ENCODE measurements at regions of chr16 and their contacts with region 1.

Region 1: DNA sequence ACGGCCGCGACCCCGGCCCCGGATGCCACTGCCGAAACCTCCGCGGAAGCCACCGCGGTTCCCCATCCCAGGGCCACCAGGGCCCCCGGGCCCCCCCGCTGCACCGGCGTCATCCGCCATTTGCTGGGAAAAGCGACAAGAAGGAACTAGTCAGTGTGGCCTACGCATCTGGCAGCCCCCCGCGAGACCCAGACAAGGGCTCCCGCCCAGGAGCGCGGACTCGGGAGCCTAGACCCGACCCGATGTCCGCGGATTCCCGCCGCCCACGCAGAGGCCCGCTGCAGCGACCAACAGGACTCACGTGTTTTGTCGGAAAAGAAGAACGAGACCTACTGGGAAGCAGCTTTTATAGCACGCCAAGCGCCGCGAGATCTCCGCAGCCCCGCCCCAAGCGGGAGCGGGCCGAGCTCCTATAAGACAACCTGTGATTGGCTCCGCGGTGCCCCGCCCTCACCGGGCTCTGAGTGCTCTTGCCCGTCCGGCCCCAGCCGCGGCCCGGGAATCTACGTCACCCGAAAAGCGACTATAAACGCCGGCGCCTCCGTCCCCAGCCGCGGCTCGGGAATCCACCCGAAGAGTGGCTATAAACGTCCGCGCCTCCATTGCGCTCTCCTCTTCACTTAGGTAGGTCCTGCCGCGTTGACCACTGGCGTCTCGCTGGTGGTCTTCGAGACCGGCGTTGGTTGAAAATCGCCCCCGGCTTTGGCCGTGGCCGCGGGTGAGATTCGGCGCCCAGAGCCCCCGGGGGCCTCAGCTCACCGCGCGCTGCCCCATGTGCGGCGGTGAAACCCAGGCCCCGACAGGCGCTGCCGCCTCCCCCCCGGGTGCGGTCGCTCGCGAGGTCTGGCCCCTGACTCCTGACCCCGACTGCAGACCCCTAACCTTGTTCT is at the start of gene RPS2:
- DNase-seq: peak; percentile 98
- H3K4me3 Mint-ChIP-seq: peak within 1 kb of the TSS; percentile 78
- H3K27ac Mint-ChIP-seq: peak within 1 kb of the TSS; percentile 95
- H3K4me1 Mint-ChIP-seq: peaks cover 23% of the 10 kb centered on the region
- H3K27me3 Mint-ChIP-seq: no peaks in the 10 kb centered on the region
- CTCF ChIP-seq: no peak
- total RNA-seq, gene RPS2: 4,760 and 4,836 TPM in 2 replicates

Region 2: GRCh38 chr16:1782352-1783091 is 182.2 kb before region 1 on chr16 and contains the starts of genes NUBP2 and SPSB3:
- CTCF ChIA-PET with region 1: no interaction called
- POLR2A ChIA-PET with region 1: interaction called, 24 read pairs
- intact Hi-C with region 1: no loop called
- DNase-seq: peak; percentile 100
- H3K4me3 Mint-ChIP-seq: peak within 1 kb of the TSS; percentile 88
- H3K27ac Mint-ChIP-seq: peak within 1 kb of the TSS; percentile 78
- H3K4me1 Mint-ChIP-seq: peaks cover 9% of the 10 kb centered on the region
- H3K27me3 Mint-ChIP-seq: no peaks in the 10 kb centered on the region
- CTCF ChIP-seq: no peak
- total RNA-seq, gene NUBP2: 71.3 and 73.9 TPM in 2 replicates
- total RNA-seq, gene SPSB3: 21.6 and 22.2 TPM in 2 replicates

Region 3: DNA sequence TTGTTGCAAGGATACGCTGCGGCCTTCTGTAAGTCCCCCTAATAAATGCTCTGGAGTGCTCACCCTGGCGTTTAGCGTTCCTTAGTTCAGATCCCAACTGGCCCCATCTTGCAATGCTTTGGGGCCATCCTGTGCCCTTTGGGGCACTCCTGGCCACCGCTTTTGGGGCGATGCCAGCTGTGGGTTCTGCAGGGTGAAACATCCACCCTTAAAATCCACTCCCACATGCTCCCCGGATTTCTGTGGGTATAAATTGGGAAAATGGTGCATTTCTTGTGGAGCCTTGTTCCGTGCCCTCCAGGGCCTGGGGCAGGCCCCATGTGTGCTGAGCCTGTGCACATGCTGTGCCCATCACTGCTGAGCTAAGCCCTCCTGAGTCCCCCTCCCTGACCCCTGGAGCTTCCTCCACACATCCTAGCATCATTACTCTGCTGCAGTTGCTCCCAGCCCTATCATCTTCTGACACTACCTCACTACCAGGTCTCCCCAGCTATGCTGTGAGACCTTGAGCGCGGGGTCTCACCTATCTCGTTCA is 27.7 kb before region 1 on chr16:
- CTCF ChIA-PET with region 1: no interaction called
- POLR2A ChIA-PET with region 1: interaction called, 33 read pairs
- intact Hi-C with region 1: no loop called
- DNase-seq: no peak
- H3K4me3 Mint-ChIP-seq: no peak overlapping the region
- H3K27ac Mint-ChIP-seq: no peak overlapping the region
- H3K4me1 Mint-ChIP-seq: peaks cover 4% of the 10 kb centered on the region
- H3K27me3 Mint-ChIP-seq: no peaks in the 10 kb centered on the region
- CTCF ChIP-seq: no peak

Region 4: GRCh38 chr16:1954209-1954912 is 10.4 kb before region 1 on chr16 and contains the start of gene RPL3L:
- CTCF ChIA-PET with region 1: interaction called, 3 read pairs
- POLR2A ChIA-PET with region 1: interaction called, 53 read pairs
- intact Hi-C with region 1: no loop called
- DNase-seq: no peak
- H3K4me3 Mint-ChIP-seq: no peak within 1 kb of the TSS
- H3K27ac Mint-ChIP-seq: no peak within 1 kb of the TSS
- H3K4me1 Mint-ChIP-seq: peaks cover 6% of the 10 kb centered on the region
- H3K27me3 Mint-ChIP-seq: no peaks in the 10 kb centered on the region
- CTCF ChIP-seq: no peak
- total RNA-seq, gene RPL3L: not detected in 2 replicates

Region 5: DNA sequence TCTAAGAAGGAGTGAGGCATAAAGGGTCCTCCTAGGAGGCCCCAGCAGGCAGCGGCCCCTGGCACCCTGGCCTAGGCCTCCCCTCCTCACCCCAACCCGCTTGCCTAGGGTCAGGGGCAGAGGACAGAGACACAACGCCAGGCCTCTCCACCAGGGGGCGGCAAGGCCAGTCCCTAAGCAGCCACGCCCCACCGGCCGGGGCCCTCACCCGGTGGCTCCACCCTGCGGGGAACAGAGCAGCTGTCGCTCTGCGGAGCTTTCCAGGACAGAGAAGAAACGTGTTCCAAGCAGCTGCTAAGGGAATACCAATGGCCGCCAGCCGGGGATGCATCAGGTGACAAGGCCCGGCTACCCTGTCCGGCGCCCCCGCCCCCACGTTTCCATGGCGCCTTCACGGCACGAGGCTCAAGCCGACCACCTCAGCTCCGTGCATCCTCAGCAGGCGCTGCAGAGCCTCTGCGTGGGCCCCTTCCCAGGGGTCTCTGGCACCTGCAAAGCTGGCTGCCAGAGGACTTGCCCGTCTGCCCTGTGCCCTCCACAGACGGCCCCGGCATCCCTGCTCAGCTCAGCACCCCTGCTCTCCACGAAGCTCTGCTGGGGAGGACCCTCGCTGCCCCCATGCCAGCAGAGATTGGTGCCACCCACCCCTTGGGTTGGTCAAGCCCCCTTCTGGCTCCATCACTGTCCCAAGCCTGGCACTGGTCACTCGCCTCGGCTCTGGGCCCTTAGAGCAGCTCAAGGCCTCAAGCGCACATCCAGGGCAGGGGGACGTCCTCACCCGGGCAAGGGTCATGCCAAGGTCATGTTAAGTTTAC is 39.3 kb after region 1 on chr16:
- CTCF ChIA-PET with region 1: interaction called, 5 read pairs
- POLR2A ChIA-PET with region 1: interaction called, 72 read pairs
- intact Hi-C with region 1: no loop called
- DNase-seq: peak; percentile 85
- H3K4me3 Mint-ChIP-seq: no peak overlapping the region
- H3K27ac Mint-ChIP-seq: peak overlapping the region; percentile 59
- H3K4me1 Mint-ChIP-seq: peaks cover 17% of the 10 kb centered on the region
- H3K27me3 Mint-ChIP-seq: no peaks in the 10 kb centered on the region
- CTCF ChIP-seq: peak; percentile 92

Region 6: GRCh38 chr16:2016407-2016922 is 51.7 kb after region 1 on chr16:
- CTCF ChIA-PET with region 1: no interaction called
- POLR2A ChIA-PET with region 1: interaction called, 14 read pairs
- intact Hi-C with region 1: no loop called
- DNase-seq: no peak
- H3K4me3 Mint-ChIP-seq: peak overlapping the region; percentile 47
- H3K27ac Mint-ChIP-seq: peak overlapping the region; percentile 96
- H3K4me1 Mint-ChIP-seq: peaks cover 6% of the 10 kb centered on the region
- H3K27me3 Mint-ChIP-seq: no peaks in the 10 kb centered on the region
- CTCF ChIP-seq: peak; percentile 39

Region 7: GRCh38 chr16:2251483-2252240 is 286.9 kb after region 1 on chr16 and contains the start of gene ECI1:
- CTCF ChIA-PET with region 1: no interaction called
- POLR2A ChIA-PET with region 1: interaction called, 10 read pairs
- intact Hi-C with region 1: no loop called
- DNase-seq: peak; percentile 94
- H3K4me3 Mint-ChIP-seq: peak within 1 kb of the TSS; percentile 92
- H3K27ac Mint-ChIP-seq: peak within 1 kb of the TSS; percentile 91
- H3K4me1 Mint-ChIP-seq: no peaks in the 10 kb centered on the region
- H3K27me3 Mint-ChIP-seq: no peaks in the 10 kb centered on the region
- CTCF ChIP-seq: peak; percentile 51
- total RNA-seq, gene ECI1: 115 and 154 TPM in 2 replicates